Activated CD4-positive, alpha-beta memory T cell treated with anti-CD3 and anti-CD28 coated beads for 36 hours (primary cell): ENCODE measurements at regions of chr3 and their contacts with region 1.

Region 1: DNA sequence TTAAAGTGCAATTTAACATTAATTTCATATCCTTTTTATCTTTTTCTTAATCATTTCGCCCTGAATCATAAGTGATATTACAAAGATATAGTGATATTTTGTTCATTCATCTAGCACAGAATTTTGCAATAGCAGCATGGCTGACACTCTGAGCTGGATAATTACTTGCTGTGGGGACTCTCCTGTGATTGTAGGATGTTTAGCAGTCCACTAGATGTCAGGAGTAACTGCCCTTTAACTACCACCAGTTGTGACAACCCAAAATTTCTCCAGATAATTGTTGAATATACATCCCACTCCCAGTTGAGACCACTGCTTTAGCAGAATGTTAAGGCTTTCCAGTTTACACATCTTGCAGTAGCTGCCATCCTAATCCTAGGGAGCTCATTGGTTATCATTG is 196.8 kb upstream of the MBNL1 start:
- DNase-seq: no peak
- H3K4me3 Mint-ChIP-seq: no peak overlapping the region
- H3K27ac Mint-ChIP-seq: no peak overlapping the region
- H3K4me1 Mint-ChIP-seq: peaks cover 2% of the 10 kb centered on the region
- H3K27me3 Mint-ChIP-seq: no peaks in the 10 kb centered on the region

Region 2: DNA sequence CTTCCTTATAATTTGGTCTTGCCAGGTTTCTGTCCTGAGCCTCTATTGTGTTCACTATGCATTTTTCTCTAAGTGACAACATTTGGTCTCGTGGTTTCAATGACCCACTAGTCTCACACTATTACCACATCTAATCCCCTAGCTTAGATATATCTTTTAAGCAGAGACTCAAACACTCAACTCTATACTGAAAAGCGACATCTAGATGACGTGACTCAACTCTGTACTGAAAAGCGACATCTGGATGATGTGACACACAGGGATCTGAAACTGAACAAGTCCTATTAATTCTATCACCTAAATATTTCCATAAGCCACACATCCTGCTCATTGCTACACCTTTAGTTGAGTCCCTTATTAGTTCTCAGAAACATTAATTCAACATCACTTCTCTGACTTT is 55.1 kb after region 1 on chr3:
- CTCF ChIA-PET with region 1: no interaction called
- POLR2A ChIA-PET with region 1: no interaction called
- intact Hi-C with region 1: loop called (anchors 5 kb)
- DNase-seq: peak; percentile 29
- H3K4me3 Mint-ChIP-seq: no peak overlapping the region
- H3K27ac Mint-ChIP-seq: no peak overlapping the region
- H3K4me1 Mint-ChIP-seq: peaks cover 20% of the 10 kb centered on the region
- H3K27me3 Mint-ChIP-seq: no peaks in the 10 kb centered on the region

Region 3: DNA sequence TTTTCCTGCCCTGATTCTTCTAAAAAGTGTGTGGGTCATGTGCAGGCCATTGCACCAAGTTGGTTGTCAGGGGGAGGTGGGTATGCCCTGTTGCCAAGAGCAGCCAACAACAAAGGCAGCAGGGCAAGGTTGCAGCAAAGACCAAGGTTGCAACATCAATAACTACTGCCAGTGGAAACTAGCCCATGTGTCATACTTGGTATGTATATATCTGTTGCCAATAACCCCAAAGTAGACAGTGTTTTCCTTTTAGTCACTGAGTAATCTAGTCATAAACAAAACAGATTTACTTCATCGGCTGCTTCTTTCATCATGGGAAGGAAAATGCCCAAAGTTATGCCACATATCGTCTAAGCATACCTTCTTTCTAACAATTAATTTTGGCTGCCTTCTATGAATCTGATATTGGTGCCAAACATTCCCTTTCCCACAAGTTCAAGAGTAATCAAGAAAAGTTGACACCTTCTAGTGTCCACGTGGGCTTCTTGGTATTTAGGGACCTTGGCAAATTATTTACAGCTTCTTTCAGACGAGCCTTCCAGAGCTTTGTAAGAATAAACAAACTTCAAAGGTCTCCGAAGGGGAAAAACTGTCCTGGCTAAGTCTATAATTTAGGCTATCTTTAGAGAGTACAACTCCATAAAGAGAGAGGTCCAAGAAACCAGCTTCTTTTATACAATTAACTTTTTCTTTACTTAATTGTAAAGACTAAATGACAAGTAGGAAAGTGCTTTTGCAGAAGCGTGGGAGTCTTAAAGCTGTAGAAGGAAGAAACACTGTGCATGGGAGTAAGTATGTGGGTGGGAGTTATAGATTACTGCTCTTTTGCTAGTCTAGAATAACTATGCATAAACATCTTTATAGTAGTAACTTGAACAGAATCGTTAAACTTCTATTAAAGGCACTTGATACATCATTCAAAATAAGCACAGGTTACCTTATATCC is 186.8 kb after region 1 on chr3:
- CTCF ChIA-PET with region 1: no interaction called
- POLR2A ChIA-PET with region 1: no interaction called
- intact Hi-C with region 1: loop called (anchors 1 kb)
- DNase-seq: peak; percentile 86
- H3K4me3 Mint-ChIP-seq: peak overlapping the region; percentile 70
- H3K27ac Mint-ChIP-seq: peak overlapping the region; percentile 95
- H3K4me1 Mint-ChIP-seq: peaks cover 83% of the 10 kb centered on the region
- H3K27me3 Mint-ChIP-seq: no peaks in the 10 kb centered on the region

Region 4: DNA sequence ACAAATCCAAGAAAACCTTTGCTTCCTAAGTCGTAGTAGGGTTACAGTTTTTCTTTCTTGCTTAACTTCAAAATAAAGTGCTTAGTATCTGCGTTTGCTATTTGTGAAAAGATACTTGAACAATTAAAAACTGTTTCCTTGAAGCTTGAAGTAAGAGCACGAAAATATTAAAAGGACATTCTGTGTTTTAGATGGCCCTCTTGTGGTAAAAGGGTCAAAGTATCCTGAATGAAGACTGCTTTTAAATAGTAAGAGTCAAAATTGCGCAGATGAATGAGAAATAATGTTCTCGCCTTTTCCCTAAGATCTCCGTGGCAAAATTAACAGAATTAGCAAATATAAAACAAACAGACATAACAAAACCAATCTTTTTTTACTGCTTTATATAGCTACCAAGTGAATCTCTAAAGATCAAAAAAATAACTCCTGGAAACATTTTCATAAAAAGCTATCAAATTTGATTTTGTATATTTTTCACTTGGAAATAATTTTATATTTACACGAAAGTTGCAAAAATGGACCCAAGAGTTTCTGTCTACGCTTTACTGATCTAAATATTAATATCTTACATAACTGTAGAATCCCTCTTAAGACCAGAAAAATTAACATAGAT is 372.2 kb after region 1 on chr3:
- CTCF ChIA-PET with region 1: interaction called, 32 read pairs
- POLR2A ChIA-PET with region 1: no interaction called
- intact Hi-C with region 1: loop called (anchors 1 kb)
- DNase-seq: no peak
- H3K4me3 Mint-ChIP-seq: no peak overlapping the region
- H3K27ac Mint-ChIP-seq: peak overlapping the region; percentile 25
- H3K4me1 Mint-ChIP-seq: peaks cover 66% of the 10 kb centered on the region
- H3K27me3 Mint-ChIP-seq: no peaks in the 10 kb centered on the region

Region 5: DNA sequence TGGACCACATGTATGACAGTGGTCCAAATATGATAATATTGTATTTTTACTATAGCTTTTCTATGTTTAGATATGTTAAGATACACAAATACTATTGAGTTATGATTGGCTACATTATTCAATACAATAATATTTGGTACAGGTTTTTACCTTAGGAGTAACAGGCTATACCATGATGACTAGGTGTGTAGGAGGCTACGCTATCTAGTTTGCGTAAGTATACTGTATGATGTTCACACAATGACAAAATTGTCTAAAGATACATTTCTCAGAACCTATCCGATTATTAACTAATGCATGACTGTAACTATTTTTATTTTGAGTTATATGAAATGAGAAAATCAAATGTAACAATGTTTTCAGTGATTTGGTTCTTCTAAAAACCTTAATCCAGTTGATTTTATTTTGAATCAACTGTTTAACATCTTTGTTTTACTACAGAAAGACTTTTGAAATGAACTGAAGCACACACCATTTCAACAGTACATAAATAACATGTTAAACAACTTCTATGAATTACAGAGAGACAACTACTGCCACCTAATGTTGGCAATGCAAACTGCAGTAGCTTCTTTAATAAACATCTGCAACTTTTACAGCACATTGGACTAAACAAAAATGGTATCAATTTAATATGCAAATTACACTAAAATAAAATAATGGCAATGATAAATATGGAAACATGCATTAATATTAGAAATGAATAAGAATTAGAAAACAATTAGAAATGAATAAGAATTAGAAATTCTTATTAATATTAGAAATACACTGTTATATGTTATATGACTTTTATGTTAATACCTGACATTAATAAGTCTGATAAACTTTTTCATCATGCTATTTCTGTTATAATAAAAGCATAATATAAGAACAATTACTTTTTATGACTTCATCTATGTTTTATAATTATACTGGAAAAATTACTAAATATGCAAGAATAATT is 452.5 kb after region 1 on chr3:
- CTCF ChIA-PET with region 1: interaction called, 14 read pairs
- POLR2A ChIA-PET with region 1: no interaction called
- intact Hi-C with region 1: loop called (anchors 1 kb)
- DNase-seq: no peak
- H3K4me3 Mint-ChIP-seq: no peak overlapping the region
- H3K27ac Mint-ChIP-seq: no peak overlapping the region
- H3K4me1 Mint-ChIP-seq: no peaks in the 10 kb centered on the region
- H3K27me3 Mint-ChIP-seq: no peaks in the 10 kb centered on the region